ENCODE measurements at regions of chr5 and their contacts with region 1.

Region 1: DNA sequence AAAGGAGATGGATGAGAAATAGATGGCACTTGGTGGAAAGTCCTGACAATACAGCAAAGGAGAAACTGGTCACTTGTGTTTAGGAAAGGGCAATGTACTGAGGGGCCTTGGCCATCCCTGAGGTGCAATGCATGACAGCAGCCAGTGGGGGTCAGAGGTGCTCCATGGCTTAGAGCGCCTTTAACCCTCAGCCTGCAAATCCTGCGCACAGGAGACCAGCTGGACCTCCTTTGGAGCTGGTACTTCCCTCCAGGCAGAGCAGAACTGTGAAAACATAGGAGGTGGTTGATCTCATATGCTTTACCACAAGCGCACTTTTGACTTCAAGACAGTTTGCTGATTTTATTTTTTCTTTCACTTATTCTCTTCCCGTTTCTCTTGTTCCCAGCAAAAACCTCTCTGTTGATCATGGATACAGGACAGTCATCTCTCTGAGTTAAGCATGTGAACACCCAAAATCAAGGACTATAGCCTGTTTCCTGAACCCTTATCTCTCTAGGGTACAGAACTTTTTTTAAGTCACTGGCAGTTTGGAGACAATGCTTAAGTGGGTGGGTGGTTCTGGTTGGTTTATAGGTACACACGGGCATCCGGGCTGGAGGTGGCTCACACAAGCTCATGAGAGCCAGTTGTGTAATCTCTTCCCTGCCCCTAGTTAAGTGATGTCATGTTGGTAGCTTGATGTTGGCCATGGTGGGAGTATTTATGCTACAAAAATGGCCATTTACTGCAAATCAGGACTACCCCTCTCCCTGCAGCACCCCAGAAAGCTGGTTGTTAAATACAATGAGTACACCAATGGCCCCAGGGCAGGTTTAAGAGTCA is 37.6 kb upstream of the ANKRD55 start:
- DNase-seq: peak; percentile 90
- H3K4me3 ChIP-seq: no peak overlapping the region
- H3K27ac ChIP-seq: no peak overlapping the region
- H3K4me1 ChIP-seq: peaks cover 6% of the 10 kb centered on the region
- H3K27me3 ChIP-seq: no peaks in the 10 kb centered on the region
- CTCF ChIP-seq: peak; percentile 97
- POLR2A ChIP-seq: no peak

Region 2: DNA sequence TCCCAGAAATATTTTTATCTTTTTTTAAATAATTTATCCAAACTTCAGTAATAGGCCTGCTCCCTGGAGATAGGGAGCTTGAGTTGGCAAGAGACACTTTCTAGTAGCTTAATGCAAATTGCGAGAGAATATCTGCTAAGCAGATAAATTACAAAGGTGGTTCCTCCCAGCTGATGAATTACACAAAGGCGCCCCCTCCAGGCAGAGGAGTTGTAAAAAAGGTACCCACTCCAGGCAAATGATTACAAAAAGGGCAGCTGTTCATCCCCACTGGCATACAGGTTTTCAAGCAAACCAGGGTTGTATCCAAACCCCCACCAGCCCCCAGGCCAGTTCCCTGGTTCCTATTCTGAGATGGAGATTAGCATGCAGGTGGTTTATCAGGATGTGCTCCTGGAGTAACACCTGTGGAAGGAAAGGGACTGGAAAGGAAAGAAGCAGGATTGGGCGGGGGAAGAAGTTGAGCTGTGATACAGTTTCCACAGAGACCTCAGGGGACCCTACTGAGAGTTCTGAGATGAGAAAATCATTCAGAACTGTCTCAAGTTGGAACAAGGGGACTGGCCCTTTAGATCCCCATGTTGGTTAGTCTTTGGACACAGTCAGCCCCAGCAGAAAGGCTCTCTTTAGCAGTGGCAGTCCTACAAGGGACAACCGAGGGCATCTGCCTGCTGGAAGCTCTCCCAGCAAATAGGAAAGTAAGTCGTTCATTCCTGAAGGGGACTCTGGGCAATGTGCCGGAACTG is 1310.9 kb before region 1 on chr5:
- CTCF ChIA-PET with region 1: no interaction called
- POLR2A ChIA-PET with region 1: no interaction called
- dilution Hi-C with region 1: no loop called
- intact Hi-C with region 1: no loop called
- DNase-seq: peak; percentile 57
- H3K4me3 ChIP-seq: no peak overlapping the region
- H3K27ac ChIP-seq: no peak overlapping the region
- H3K4me1 ChIP-seq: peaks cover 2% of the 10 kb centered on the region
- H3K27me3 ChIP-seq: no peaks in the 10 kb centered on the region
- CTCF ChIP-seq: peak; percentile 50
- POLR2A ChIP-seq: no peak

Region 3: GRCh38 chr5:56175488-56175887 is 95.3 kb before region 1 on chr5:
- CTCF ChIA-PET with region 1: no interaction called
- POLR2A ChIA-PET with region 1: no interaction called
- dilution Hi-C with region 1: no loop called
- intact Hi-C with region 1: no loop called
- DNase-seq: peak; percentile 81
- H3K4me3 ChIP-seq: no peak overlapping the region
- H3K27ac ChIP-seq: peak overlapping the region; percentile 47
- H3K4me1 ChIP-seq: peaks cover 35% of the 10 kb centered on the region
- H3K27me3 ChIP-seq: no peaks in the 10 kb centered on the region
- CTCF ChIP-seq: no peak
- POLR2A ChIP-seq: no peak

Region 4: DNA sequence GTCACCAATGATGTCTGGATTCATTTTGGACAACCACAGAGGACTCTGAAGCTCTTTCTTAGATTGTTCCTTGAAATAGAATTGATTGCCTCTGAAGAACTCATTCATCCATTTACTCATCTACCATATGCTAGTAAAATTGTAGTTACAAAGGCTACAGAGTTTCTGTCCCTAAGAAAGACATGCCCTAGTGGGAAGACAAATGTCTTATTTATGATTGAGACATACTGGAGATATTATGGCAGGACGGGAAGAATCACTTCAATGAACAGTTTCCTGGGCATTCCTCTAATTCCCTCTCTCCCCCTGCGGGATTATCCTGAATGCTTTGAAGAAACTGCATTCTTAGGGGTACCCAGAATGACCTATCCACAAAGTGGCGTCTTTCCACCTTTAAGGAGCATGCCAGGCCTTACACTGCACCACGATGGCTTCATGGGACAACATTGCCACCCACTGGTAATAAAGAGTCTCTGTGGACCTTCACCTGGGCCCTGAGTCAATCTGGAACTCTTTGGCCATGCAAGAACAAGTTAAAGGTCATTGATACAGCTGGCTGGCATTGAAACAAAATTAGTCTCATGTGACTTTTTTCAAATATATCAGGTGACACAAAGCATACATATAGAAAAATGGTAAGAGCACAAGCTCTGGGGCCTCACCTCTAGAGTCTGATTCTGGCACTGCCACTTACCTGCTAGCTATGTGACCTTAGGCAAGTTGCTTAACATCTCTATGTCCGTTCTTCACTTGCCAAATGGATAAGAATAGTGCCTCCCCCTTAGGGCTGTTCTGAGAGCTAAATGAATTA is 69.7 kb before region 1 on chr5:
- CTCF ChIA-PET with region 1: interaction called, 12 read pairs
- POLR2A ChIA-PET with region 1: no interaction called
- dilution Hi-C with region 1: no loop called
- intact Hi-C with region 1: loop called (anchors 2 kb)
- DNase-seq: peak; percentile 93
- H3K4me3 ChIP-seq: no peak overlapping the region
- H3K27ac ChIP-seq: peak overlapping the region; percentile 10
- H3K4me1 ChIP-seq: peaks cover 17% of the 10 kb centered on the region
- H3K27me3 ChIP-seq: no peaks in the 10 kb centered on the region
- CTCF ChIP-seq: peak; percentile 69 to 80
- POLR2A ChIP-seq: no peak

Region 5: DNA sequence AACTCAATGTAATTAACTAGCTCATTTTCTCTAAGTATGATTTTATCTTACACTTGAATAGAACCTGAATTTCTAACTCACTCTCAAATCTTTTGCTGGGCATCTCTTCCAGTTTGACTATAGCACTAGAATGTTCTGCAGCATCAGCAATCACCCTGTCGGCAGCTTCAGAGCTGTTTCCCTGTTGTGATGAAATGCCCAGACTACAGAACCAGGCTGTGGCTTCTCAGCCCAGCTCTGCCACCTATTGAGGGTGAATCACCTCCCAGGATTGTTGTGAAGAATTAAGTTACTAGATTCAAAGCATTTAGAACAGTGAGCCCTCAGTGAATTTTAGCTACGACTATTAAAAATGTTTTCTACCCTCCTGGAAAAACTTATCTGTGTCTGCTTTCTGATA is 52.7 kb after region 1 on chr5:
- CTCF ChIA-PET with region 1: interaction called, 10 read pairs
- POLR2A ChIA-PET with region 1: no interaction called
- dilution Hi-C with region 1: no loop called
- intact Hi-C with region 1: no loop called
- DNase-seq: no peak
- H3K4me3 ChIP-seq: no peak overlapping the region
- H3K27ac ChIP-seq: no peak overlapping the region
- H3K4me1 ChIP-seq: peaks cover 15% of the 10 kb centered on the region
- H3K27me3 ChIP-seq: no peaks in the 10 kb centered on the region
- CTCF ChIP-seq: no peak
- POLR2A ChIP-seq: no peak

Region 6: DNA sequence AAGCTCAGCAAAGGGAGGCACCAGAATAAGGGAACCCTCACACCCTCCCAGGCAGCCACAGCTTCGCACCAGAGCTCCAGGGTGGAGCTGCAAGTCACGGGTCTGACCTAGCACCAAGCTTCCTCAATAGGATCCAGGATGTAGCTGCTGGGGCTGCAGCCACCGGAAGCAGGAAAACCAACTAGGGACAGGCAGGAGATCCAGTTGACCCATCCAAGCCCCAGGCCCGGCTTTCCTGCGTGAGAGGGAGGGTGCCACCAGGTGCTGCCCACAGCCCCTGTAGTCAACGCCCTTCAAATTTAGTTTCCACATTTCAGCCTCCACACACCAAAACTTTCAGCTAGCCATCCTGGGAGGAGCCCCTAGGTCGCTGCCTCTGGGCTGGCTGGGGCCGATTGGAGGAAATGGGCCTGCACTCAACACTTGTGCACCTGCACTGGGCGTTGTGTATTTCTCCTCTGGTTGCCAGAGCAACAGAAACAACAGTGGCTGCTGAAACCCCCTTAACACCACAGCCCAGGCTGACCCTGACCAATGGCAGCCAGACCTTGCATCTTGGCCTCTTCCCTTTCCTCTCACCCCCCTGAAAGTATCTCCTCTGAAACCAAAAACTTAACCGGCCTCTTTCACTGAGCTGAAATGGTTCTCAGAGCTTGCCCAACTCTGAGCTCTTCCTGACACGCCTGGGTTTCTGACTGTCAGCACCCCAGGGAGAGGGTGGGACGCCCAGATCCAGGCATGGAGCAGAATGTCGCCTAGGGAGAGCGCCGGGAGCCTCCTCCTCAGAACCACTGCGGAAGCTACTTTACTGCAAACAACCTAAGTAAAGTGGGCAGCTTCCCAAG is 318.1 kb after region 1 on chr5:
- CTCF ChIA-PET with region 1: no interaction called
- POLR2A ChIA-PET with region 1: no interaction called
- dilution Hi-C with region 1: no loop called
- intact Hi-C with region 1: loop called (anchors 10 kb)
- DNase-seq: no peak
- H3K4me3 ChIP-seq: no peak overlapping the region
- H3K27ac ChIP-seq: no peak overlapping the region
- H3K4me1 ChIP-seq: peaks cover 6% of the 10 kb centered on the region
- H3K27me3 ChIP-seq: peaks cover 3 to 6% of the 10 kb centered on the region in 2 experiments
- CTCF ChIP-seq: no peak
- POLR2A ChIP-seq: no peak

Region 7: DNA sequence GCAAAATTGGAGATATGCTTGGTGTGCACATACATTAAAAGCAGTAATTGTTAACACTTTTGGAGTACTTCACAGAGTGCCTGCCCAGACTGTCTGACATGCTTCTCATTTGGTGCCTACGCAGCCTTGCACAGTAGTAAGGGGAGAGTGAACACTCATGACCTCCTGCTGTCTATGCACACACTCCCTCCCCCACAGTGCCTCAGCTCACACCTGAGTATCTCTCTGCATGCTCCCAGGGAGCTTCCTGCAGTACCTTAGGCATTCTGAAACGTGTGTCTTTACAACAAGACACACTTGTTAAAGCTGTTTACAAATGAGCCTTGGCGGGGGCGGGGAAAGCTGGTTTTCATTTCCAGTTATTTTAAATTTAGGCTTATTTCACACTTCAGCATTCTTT is 562.5 kb after region 1 on chr5:
- CTCF ChIA-PET with region 1: interaction called, 277 read pairs
- POLR2A ChIA-PET with region 1: interaction called, 5 read pairs
- dilution Hi-C with region 1: no loop called
- intact Hi-C with region 1: loop called (anchors 1 kb)
- DNase-seq: no peak
- H3K4me3 ChIP-seq: no peak overlapping the region
- H3K27ac ChIP-seq: no peak overlapping the region
- H3K4me1 ChIP-seq: peaks cover 11% of the 10 kb centered on the region
- H3K27me3 ChIP-seq: no peaks in the 10 kb centered on the region
- CTCF ChIP-seq: no peak
- POLR2A ChIP-seq: no peak

Region 8: DNA sequence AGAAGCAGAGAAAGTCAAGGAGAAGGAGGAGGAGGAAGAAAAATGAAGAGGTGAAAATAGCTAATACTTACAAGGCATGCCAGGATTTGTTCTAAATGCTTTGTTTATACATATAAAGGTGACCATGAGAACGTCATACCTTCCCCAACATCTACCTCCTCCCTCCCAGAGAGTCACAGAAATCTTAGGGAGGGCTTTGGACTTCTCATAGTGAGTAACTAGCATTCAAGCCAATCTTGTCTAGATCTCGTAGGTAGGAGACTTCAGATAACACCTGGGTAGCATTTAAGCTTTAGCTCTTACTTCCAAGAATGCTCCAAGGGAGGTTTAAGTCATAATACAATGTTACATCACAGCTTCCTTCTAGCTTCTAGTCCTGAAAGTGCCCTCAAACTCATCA is 866.6 kb after region 1 on chr5:
- CTCF ChIA-PET with region 1: interaction called, 20 read pairs
- POLR2A ChIA-PET with region 1: no interaction called
- dilution Hi-C with region 1: no loop called
- intact Hi-C with region 1: loop called (anchors 1 kb)
- DNase-seq: no peak
- H3K4me3 ChIP-seq: no peak overlapping the region
- H3K27ac ChIP-seq: no peak overlapping the region
- H3K4me1 ChIP-seq: no peaks in the 10 kb centered on the region
- H3K27me3 ChIP-seq: no peaks in the 10 kb centered on the region
- CTCF ChIP-seq: no peak
- POLR2A ChIP-seq: no peak